PC-9 (cell line): ENCODE measurements at regions of chr16 and their contacts with region 1.

Region 1: DNA sequence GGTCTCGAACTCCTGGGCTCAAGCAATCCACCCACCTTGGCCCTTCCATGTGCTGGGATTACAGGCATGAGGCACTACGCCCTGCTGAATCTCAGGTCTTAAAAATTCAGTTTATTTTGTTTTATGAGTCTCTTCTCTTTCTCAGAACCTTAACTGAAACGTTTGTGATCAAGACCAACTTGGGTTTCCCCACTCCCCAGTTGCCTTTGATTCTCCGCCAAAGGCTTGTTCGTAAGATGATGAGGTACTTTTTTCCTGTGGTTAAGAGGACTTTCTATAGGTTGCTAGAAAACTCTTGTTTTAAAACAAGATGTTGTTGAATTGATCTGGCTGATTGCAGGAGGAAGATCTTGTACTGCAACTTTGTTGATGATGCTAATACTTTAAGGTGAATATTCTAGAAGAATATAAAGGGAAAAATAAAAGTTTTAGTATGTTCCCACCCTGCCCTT is 11.7 kb downstream of the ABCC1 start:
- DNase-seq: no peak
- H3K4me3 ChIP-seq: no peak overlapping the region
- H3K27ac ChIP-seq: no peak overlapping the region
- H3K4me1 ChIP-seq: peaks cover 32% of the 10 kb centered on the region
- H3K27me3 ChIP-seq: no peaks in the 10 kb centered on the region
- CTCF ChIP-seq: no peak

Region 2: GRCh38 chr16:15988268-15989013 is 27.4 kb after region 1 on chr16:
- CTCF ChIA-PET with region 1: interaction called, 12 read pairs
- POLR2A ChIA-PET with region 1: no interaction called
- intact Hi-C with region 1: no loop called
- DNase-seq: peak in 1 of 2 experiments; percentile 24
- H3K4me3 ChIP-seq: no peak overlapping the region
- H3K27ac ChIP-seq: peak overlapping the region; percentile 43
- H3K4me1 ChIP-seq: peaks cover 13% of the 10 kb centered on the region; the same call in 1 of the 2 replicates
- H3K27me3 ChIP-seq: no peaks in the 10 kb centered on the region
- CTCF ChIP-seq: no peak

Region 3: GRCh38 chr16:16092925-16093627 is 132.0 kb after region 1 on chr16:
- CTCF ChIA-PET with region 1: no interaction called
- POLR2A ChIA-PET with region 1: interaction called, 14 read pairs
- intact Hi-C with region 1: no loop called
- DNase-seq: no peak
- H3K4me3 ChIP-seq: no peak overlapping the region
- H3K27ac ChIP-seq: no peak overlapping the region
- H3K4me1 ChIP-seq: no peaks in the 10 kb centered on the region
- H3K27me3 ChIP-seq: no peaks in the 10 kb centered on the region
- CTCF ChIP-seq: no peak